ENCODE measurements at regions of chr18 and their contacts with region 1.

Region 1: DNA sequence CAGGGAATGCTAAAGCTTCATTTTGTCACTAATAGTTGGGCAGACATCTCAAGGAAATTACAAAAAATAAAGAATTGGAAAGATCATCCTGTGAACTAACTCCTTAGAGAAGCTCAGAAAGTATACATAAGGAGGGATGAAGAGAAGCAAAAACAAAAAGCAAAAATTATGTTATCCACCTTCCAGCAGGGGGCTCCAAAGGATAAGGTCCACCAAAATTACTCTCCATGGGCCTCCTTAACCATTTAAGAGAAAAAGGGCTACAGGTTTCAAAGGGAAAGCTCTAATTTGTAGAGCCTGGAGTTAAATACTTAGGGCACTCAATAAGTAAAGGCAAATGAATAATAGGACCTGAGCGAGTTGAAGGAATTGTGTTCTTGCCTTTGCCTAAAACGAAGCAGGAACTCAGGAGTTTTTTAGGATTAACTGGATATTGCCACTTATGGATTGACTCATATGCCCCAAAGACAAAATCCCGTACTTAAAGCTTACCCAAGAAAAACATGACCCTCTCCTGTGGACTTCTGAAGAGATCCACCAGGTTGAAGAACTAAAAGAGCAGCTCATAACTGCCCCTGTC is 1167.9 kb downstream of the DSC3 start:
- DNase-seq: no peak
- ATAC-seq: no peak
- H3K4me3 ChIP-seq: no peak overlapping the region
- H3K4me3 Mint-ChIP-seq: no peak overlapping the region
- H3K27ac ChIP-seq: no peak overlapping the region
- H3K27ac Mint-ChIP-seq: no peak overlapping the region
- H3K4me1 ChIP-seq: no peaks in the 10 kb centered on the region
- H3K4me1 Mint-ChIP-seq: no peaks in the 10 kb centered on the region
- H3K27me3 ChIP-seq: no peaks in the 10 kb centered on the region
- H3K27me3 Mint-ChIP-seq: no peaks in the 10 kb centered on the region
- CTCF ChIP-seq: peak; percentile 17

Region 2: GRCh38 chr18:29892960-29893558 is 18.4 kb after region 1 on chr18:
- CTCF ChIA-PET with region 1: no interaction called
- POLR2A ChIA-PET with region 1: no interaction called
- intact Hi-C with region 1: no loop called
- DNase-seq: no peak
- ATAC-seq: no peak
- H3K4me3 ChIP-seq: no peak overlapping the region
- H3K4me3 Mint-ChIP-seq: no peak overlapping the region
- H3K27ac ChIP-seq: no peak overlapping the region
- H3K27ac Mint-ChIP-seq: no peak overlapping the region
- H3K4me1 ChIP-seq: no peaks in the 10 kb centered on the region
- H3K4me1 Mint-ChIP-seq: no peaks in the 10 kb centered on the region
- H3K27me3 ChIP-seq: no peaks in the 10 kb centered on the region
- H3K27me3 Mint-ChIP-seq: no peaks in the 10 kb centered on the region
- CTCF ChIP-seq: peak; percentile 41

Region 3: GRCh38 chr18:30971338-30971956 is 1096.8 kb after region 1 on chr18:
- CTCF ChIA-PET with region 1: interaction called, 3 read pairs
- POLR2A ChIA-PET with region 1: no interaction called
- intact Hi-C with region 1: loop called (anchors 10 kb)
- DNase-seq: peak; percentile 17
- ATAC-seq: no peak
- H3K4me3 ChIP-seq: no peak overlapping the region
- H3K4me3 Mint-ChIP-seq: no peak overlapping the region
- H3K27ac ChIP-seq: no peak overlapping the region
- H3K27ac Mint-ChIP-seq: no peak overlapping the region
- H3K4me1 ChIP-seq: no peaks in the 10 kb centered on the region
- H3K4me1 Mint-ChIP-seq: no peaks in the 10 kb centered on the region
- H3K27me3 ChIP-seq: no peaks in the 10 kb centered on the region
- H3K27me3 Mint-ChIP-seq: no peaks in the 10 kb centered on the region
- CTCF ChIP-seq: peak; percentile 87